ENCODE measurements at regions of chr17 and their contacts with region 1.

Region 1: DNA sequence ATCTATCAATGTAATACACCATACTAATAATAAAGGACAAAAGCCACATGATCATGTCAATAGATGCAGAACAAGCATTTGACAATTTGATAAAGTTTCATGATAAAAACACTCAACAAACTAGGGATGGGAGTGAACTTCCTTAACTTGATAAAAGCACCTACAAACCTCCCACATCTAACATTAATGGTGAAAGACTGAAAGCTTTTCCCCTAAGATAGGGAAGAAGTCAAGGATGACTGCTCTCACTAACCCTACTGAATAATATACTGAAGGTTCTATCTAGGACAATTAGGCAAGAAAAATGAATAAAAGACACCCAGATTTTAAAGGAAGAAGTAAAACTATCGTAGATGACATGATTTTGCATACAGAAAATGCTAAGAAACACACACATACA is 10.4 kb upstream of the DYNLL2 start:
- DNase-seq: no peak
- CTCF ChIP-seq: no peak

Region 2: GRCh38 chr17:58020401-58020800 is 52.5 kb before region 1 on chr17:
- in situ Hi-C with region 1: loop called (anchors 5 kb)
- DNase-seq: no peak
- CTCF ChIP-seq: no peak

Region 3: DNA sequence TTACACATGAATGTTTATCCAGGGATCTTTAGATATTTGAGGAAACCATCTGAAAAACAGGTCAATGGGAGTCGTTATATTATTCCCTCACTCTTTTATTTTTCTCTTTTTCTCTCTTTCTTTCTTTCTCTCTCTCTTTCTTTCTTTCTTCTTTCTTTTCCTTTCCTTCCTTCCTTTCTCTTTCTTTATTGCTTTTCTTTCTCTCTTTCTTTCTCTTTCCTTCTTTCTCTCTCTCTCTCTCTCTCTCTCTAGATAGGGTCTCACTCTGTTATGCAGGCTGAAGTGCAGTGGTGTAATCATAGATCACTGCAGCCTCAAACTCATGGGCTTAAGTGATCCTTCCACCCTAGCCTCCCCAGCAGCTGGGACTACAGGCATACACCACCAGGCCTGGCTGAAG is 55.0 kb after region 1 on chr17:
- in situ Hi-C with region 1: no loop called
- DNase-seq: no peak
- CTCF ChIP-seq: no peak

Measured in GM13977 (cell line).